Activated T-helper 2 cell treated with anti-CD3 and anti-CD28 coated beads, Interferon-gamma antibody, Interleukin-2, Interleukin-4, amounts not matched to agents 10 μg/mL and 5 μg/mL and 100 μg/mL, durations not matched to agents 14 hours and 24 hours and 36 hours (primary cell): ENCODE measurements at regions of chr2 and their contacts with region 1.

Region 1: GRCh38 chr2:68467077-68467960 is at the starts of genes APLF and FBXO48:
- DNase-seq: peak; percentile 98
- H3K4me3 Mint-ChIP-seq: peak within 1 kb of the TSS; percentile 95
- H3K27ac Mint-ChIP-seq: peak within 1 kb of the TSS; percentile 94
- H3K4me1 Mint-ChIP-seq: peaks cover 50% of the 10 kb centered on the region
- H3K27me3 Mint-ChIP-seq: no peaks in the 10 kb centered on the region
- total RNA-seq, gene APLF: 3.8 TPM in 2 replicates
- total RNA-seq, gene FBXO48: 1.3 TPM in 2 replicates

Region 2: DNA sequence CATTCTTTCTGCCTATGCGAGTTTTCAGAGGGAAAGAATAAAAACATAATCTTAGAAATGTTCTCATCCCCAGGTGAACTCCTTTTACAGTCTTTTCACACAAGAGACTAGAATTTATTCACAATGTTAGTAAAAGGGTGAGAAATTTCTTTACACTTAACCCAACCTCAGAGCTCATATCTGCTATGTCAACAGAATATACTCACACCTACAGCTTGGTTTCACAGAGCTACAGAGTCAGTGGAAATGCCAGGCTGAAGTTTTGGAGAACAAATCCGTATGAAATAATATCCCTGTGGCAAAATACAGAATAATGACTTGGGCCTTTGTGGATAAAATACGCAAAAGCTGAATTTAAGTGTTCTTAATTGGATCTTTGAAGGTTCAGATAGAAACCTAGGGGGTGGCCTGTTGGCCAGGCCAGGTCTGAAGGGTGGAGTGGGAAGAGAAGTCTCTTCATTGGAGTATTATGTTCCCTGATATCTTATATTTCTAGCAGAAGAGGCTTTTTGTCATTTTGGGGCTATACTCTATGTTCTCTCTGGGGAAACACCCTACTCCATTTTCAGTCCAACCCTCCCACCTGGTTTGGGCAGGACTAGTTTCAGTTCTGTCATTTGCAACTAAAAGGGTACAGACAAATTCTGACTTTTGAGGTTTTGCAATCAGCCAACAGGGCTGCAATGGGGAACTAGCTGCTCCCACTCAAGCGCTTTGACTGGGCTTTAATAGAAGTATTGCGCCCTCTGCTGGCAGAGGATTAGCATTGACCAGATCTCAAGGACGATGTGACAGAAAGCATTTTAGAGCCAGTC is 25.9 kb before region 1 on chr2:
- intact Hi-C with region 1: loop called (anchors 1 kb)
- DNase-seq: peak; percentile 78
- H3K4me3 Mint-ChIP-seq: peak overlapping the region; percentile 28
- H3K27ac Mint-ChIP-seq: peak overlapping the region; percentile 65
- H3K4me1 Mint-ChIP-seq: peaks cover 16% of the 10 kb centered on the region
- H3K27me3 Mint-ChIP-seq: peaks cover 15% of the 10 kb centered on the region

Region 3: GRCh38 chr2:68632021-68632420 is 164.7 kb after region 1 on chr2:
- intact Hi-C with region 1: no loop called
- DNase-seq: no peak
- H3K4me3 Mint-ChIP-seq: no peak overlapping the region
- H3K27ac Mint-ChIP-seq: no peak overlapping the region
- H3K4me1 Mint-ChIP-seq: no peaks in the 10 kb centered on the region
- H3K27me3 Mint-ChIP-seq: peaks cover 45% of the 10 kb centered on the region

Region 4: GRCh38 chr2:68653538-68653982 is 186.2 kb after region 1 on chr2:
- intact Hi-C with region 1: loop called (anchors 2 kb)
- DNase-seq: peak; percentile 56
- H3K4me3 Mint-ChIP-seq: peak overlapping the region; percentile 35
- H3K27ac Mint-ChIP-seq: peak overlapping the region; percentile 42
- H3K4me1 Mint-ChIP-seq: peaks cover 49% of the 10 kb centered on the region
- H3K27me3 Mint-ChIP-seq: peaks cover 37% of the 10 kb centered on the region

Region 5: GRCh38 chr2:68837164-68837860 is 370.0 kb after region 1 on chr2:
- intact Hi-C with region 1: loop called (anchors 2 kb)
- DNase-seq: peak; percentile 43
- H3K4me3 Mint-ChIP-seq: no peak overlapping the region
- H3K27ac Mint-ChIP-seq: peak overlapping the region; percentile 78
- H3K4me1 Mint-ChIP-seq: peaks cover 49% of the 10 kb centered on the region
- H3K27me3 Mint-ChIP-seq: no peaks in the 10 kb centered on the region

Region 6: GRCh38 chr2:69012310-69013141 is 545.2 kb after region 1 on chr2:
- intact Hi-C with region 1: loop called (anchors 10 kb)
- DNase-seq: no peak
- H3K4me3 Mint-ChIP-seq: peak overlapping the region; percentile 75
- H3K27ac Mint-ChIP-seq: no peak overlapping the region
- H3K4me1 Mint-ChIP-seq: peaks cover 10% of the 10 kb centered on the region
- H3K27me3 Mint-ChIP-seq: peaks cover 61% of the 10 kb centered on the region